Heart left ventricle (tissue), 16 donors: ENCODE measurements at regions of chr2 and their contacts with region 1.

Region 1: GRCh38 chr2:119759451-119760236 is at the start of gene PTPN4:
- DNase-seq: peak; percentile 97 to 98 (median 98)
- ATAC-seq: peak; percentile 97 to 98 (median 98)
- H3K4me3 ChIP-seq: peak within 1 kb of the TSS; percentile 62 to 95 (median 86)
- H3K27ac ChIP-seq: peak within 1 kb of the TSS; percentile 87 to 98 (median 96)
- H3K4me1 ChIP-seq: peaks cover 0 to 46% (median 33%) of the 10 kb centered on the region in 12 donors
- H3K27me3 ChIP-seq: no peaks in the 10 kb centered on the region
- CTCF ChIP-seq: peak in 2 of 12 donors; percentile 14 to 16
- POLR2A ChIP-seq: peak in 1 of 2 donors; percentile 84
- total RNA-seq, gene PTPN4: 21.2 to 49.0 (median 43.6) TPM

Region 2: DNA sequence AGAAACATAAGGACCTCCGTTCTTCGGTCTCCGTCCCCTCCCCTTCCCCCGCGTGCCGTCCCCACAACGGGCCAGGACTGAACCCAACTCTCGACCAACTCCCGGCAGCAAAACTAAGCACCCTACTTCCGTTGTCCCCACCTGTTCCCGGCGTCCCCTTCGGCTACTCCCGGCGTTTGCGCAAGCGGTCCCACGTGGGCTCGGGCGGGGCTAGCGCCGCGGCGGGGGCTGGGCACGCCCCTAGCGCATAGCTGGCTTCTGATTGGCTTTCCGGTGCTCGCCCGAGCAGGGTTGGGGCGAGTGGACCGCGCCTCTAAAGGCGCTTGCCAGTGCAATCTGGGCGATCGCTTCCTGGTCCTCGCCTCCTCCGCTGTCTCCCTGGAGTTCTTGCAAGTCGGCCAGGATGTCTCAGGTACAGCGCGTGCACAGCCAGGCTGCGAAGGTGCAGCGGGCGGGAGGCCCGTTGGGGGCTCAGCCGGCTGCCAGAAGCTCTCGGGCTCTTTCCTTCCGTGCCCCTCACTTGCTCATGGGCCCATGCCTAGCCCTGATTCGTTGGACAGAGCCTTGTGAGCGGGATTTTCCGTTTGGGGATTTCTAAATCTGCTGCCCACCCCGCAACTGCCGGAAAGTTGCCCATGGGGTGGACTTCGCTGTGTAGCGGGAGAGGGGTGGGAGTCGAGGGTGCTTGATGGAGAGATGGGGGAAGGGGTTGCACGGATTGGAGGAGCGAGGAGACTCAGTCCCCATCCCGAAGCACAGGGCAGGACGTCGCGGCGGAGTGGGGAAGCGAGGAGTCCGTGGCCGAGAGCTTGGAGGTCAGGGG is 392.8 kb before region 1 on chr2 and contains the starts of genes C2orf76 and DBI:
- intact Hi-C with region 1: loop called in 1 of 10 experiments (anchors 10 kb)
- DNase-seq: peak; percentile 96 to 97 (median 96)
- ATAC-seq: peak; percentile 96 to 98 (median 97)
- H3K4me3 ChIP-seq: peak within 1 kb of the TSS; percentile 67 to 97 (median 84)
- H3K27ac ChIP-seq: peak within 1 kb of the TSS; percentile 79 to 97 (median 92)
- H3K4me1 ChIP-seq: peaks cover 0 to 65% (median 37%) of the 10 kb centered on the region in 12 donors
- H3K27me3 ChIP-seq: no peaks in the 10 kb centered on the region
- CTCF ChIP-seq: no peak
- POLR2A ChIP-seq: peak; percentile 46 to 91
- total RNA-seq, gene C2orf76: 1.7 to 11.8 (median 8.8) TPM
- total RNA-seq, gene DBI: 208 to 502 (median 273) TPM

Region 3: GRCh38 chr2:119702918-119703401 is 56.7 kb before region 1 on chr2:
- intact Hi-C with region 1: loop called in 2 of 10 experiments (anchors 5 to 10 kb)
- DNase-seq: peak; percentile 64 to 86 (median 66)
- ATAC-seq: peak; percentile 79 to 91 (median 90)
- H3K4me3 ChIP-seq: no peak overlapping the region
- H3K27ac ChIP-seq: no peak overlapping the region
- H3K4me1 ChIP-seq: peaks cover 0 to 25% (median 3%) of the 10 kb centered on the region in 12 donors
- H3K27me3 ChIP-seq: no peaks in the 10 kb centered on the region
- CTCF ChIP-seq: peak; percentile 85 to 96 (median 92)
- POLR2A ChIP-seq: no peak

Region 4: DNA sequence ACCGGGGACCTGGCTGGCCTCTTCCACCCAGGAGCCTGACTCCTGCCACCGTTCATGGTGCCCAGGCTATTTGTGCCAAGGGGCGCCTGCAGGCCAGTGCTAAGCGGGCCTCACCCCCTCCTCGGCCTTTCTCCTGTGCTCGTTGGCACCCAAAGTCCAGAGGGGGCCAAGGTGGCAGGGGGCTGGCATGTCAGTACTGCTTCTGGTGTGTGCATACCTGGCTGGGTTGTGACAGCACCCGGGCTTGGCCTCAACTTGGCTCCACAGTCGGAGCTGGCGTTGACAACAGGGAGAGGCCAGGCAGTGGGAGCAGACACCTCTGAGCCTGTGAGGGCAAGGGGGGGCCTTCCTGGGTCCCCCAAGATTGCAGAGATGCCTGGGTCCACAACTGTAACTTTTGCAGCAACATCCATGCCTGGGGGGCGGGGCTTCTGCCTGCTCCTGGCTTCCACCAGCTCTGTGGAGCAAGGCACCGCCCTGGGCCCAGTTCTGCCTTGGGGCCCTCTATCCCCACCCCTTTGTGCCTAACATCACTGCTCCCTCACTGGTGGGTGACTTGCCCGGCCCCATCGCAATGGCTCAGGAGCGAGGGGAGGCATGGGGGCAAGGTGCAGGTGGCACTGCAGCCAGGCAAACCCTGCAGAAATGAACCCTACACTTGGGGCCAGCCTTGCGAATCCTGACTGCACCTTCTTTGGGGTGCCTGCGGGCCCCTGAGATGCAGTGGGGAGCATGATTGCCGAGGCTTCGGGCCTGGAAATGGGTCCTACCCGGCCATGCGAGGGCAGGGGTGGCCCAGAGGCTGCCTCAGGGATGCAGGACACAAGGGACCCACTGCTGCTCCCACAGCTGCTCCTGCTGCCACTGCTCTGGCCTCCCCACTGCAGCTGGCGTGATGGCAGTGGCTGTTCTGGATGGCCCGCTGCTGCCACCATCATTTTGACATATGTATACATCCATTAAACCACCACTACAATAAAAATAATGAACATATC is 36.0 kb after region 1 on chr2:
- intact Hi-C with region 1: loop called in 2 of 10 experiments (anchors 5 kb)
- DNase-seq: peak in 1 of 5 donors; percentile 47
- ATAC-seq: peak in 3 of 4 donors; percentile 24 to 46 (median 41)
- H3K4me3 ChIP-seq: no peak overlapping the region
- H3K27ac ChIP-seq: no peak overlapping the region
- H3K4me1 ChIP-seq: peaks cover 0 to 36% (median 3%) of the 10 kb centered on the region in 12 donors
- H3K27me3 ChIP-seq: no peaks in the 10 kb centered on the region
- CTCF ChIP-seq: no peak
- POLR2A ChIP-seq: no peak

Region 5: GRCh38 chr2:119826370-119826961 is 66.8 kb after region 1 on chr2:
- intact Hi-C with region 1: loop called in 4 of 10 experiments (anchors 2 to 5 kb)
- DNase-seq: no peak
- ATAC-seq: peak in 3 of 4 donors; percentile 62 to 70 (median 64)
- H3K4me3 ChIP-seq: no peak overlapping the region
- H3K27ac ChIP-seq: no peak overlapping the region
- H3K4me1 ChIP-seq: peaks cover 0 to 14% (median 5%) of the 10 kb centered on the region in 12 donors
- H3K27me3 ChIP-seq: no peaks in the 10 kb centered on the region
- CTCF ChIP-seq: peak; percentile 40 to 66 (median 52)
- POLR2A ChIP-seq: no peak

Region 6: GRCh38 chr2:119932809-119933208 is 173.2 kb after region 1 on chr2:
- intact Hi-C with region 1: no loop called
- DNase-seq: no peak
- ATAC-seq: no peak
- H3K4me3 ChIP-seq: no peak overlapping the region
- H3K27ac ChIP-seq: no peak overlapping the region
- H3K4me1 ChIP-seq: no peaks in the 10 kb centered on the region
- H3K27me3 ChIP-seq: no peaks in the 10 kb centered on the region
- CTCF ChIP-seq: no peak
- POLR2A ChIP-seq: no peak

Region 7: DNA sequence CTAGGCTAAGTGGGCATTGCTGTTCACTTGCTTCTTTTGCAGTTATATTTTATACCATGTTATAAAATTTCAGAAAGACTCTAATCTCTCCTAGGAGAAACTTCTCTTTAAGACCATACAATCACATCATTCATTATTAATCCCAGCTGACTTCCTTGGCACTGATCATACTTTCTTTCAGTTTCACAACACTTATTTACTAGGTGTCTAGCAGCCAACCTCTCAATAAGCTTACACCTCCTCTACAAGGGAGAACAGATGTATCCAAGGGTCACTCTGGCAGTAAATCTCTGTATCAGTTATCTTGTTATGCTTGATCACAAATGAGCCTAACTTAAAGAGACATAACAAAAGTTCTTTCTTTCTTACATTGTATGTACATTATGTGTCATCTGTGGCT is 183.4 kb after region 1 on chr2:
- intact Hi-C with region 1: loop called in 3 of 10 experiments (anchors 5 to 10 kb)
- DNase-seq: no peak
- ATAC-seq: peak in 2 of 4 donors; percentile 11 to 54
- H3K4me3 ChIP-seq: no peak overlapping the region
- H3K27ac ChIP-seq: no peak overlapping the region
- H3K4me1 ChIP-seq: peaks cover 0 to 18% (median 2%) of the 10 kb centered on the region in 12 donors
- H3K27me3 ChIP-seq: no peaks in the 10 kb centered on the region
- CTCF ChIP-seq: no peak
- POLR2A ChIP-seq: no peak

Region 8: GRCh38 chr2:120109186-120110061 is 349.8 kb after region 1 on chr2:
- intact Hi-C with region 1: loop called in 1 of 10 experiments (anchors 10 kb)
- DNase-seq: no peak
- ATAC-seq: peak; percentile 5 to 65 (median 48)
- H3K4me3 ChIP-seq: no peak overlapping the region
- H3K27ac ChIP-seq: no peak overlapping the region
- H3K4me1 ChIP-seq: peaks cover 3 to 29% (median 19%) of the 10 kb centered on the region in 12 donors
- H3K27me3 ChIP-seq: no peaks in the 10 kb centered on the region
- CTCF ChIP-seq: peak in 11 of 12 donors; percentile 20 to 58 (median 50)
- POLR2A ChIP-seq: no peak